ENCODE measurements at regions of chr17 and their contacts with region 1.

Region 1: DNA sequence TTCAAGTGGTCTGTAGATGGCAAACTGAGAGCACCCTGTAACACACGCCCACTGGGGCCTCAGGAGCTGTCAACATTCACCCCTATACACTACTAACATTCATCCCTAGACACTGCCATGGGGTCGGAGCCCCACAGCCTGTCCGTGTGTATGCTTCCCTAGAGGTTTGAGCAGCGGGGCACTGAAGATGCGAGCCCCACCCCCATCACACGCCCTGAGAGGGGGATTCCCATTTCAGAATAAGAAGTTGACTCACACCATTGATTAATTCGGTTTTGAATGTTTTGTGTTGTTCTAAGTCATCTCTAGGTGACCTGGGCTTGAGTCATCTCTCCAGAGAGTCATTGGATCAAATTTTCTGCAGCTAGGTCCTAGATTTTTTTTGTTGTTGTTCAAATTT is 37.3 kb upstream of the MMD start:
- DNase-seq: no peak
- H3K4me3 ChIP-seq: no peak overlapping the region
- H3K27ac ChIP-seq: no peak overlapping the region
- H3K4me1 ChIP-seq: peaks cover 0 to 23% (median 19%) of the 10 kb centered on the region in 4 donors
- H3K27me3 ChIP-seq: no peaks in the 10 kb centered on the region
- CTCF ChIP-seq: no peak
- EP300 ChIP-seq: no peak
- POLR2A ChIP-seq: no peak

Region 2: GRCh38 chr17:55410722-55411462 is 48.1 kb before region 1 on chr17:
- intact Hi-C with region 1: loop called (anchors 5 kb)
- DNase-seq: no peak
- H3K4me3 ChIP-seq: no peak overlapping the region
- H3K27ac ChIP-seq: peak overlapping the region; percentile 7 to 27 (median 19)
- H3K4me1 ChIP-seq: peaks cover 8 to 21% (median 15%) of the 10 kb centered on the region in 4 donors
- H3K27me3 ChIP-seq: no peaks in the 10 kb centered on the region
- CTCF ChIP-seq: no peak
- EP300 ChIP-seq: no peak
- POLR2A ChIP-seq: no peak

Region 3: GRCh38 chr17:55564081-55564480 is 105.1 kb after region 1 on chr17:
- intact Hi-C with region 1: no loop called
- DNase-seq: no peak
- H3K4me3 ChIP-seq: no peak overlapping the region
- H3K27ac ChIP-seq: no peak overlapping the region
- H3K4me1 ChIP-seq: peaks cover 0 to 9% (median 2%) of the 10 kb centered on the region in 4 donors
- H3K27me3 ChIP-seq: no peaks in the 10 kb centered on the region
- CTCF ChIP-seq: no peak
- EP300 ChIP-seq: no peak
- POLR2A ChIP-seq: no peak

Measured in esophagus muscularis mucosa (tissue), 4 donors.